PC-3 (cell line): ENCODE measurements at regions of chr1 and their contacts with region 1.

Region 1: GRCh38 chr1:32072622-32073298 is at the start of gene TMEM39B:
- DNase-seq: peak; percentile 93
- ATAC-seq: peak; percentile 80
- H3K4me3 ChIP-seq: peak within 1 kb of the TSS; percentile 95
- H3K27ac ChIP-seq: peak within 1 kb of the TSS; percentile 81
- H3K4me1 ChIP-seq: peaks cover 17% of the 10 kb centered on the region
- H3K27me3 ChIP-seq: no peaks in the 10 kb centered on the region
- CTCF ChIP-seq: no peak
- total RNA-seq, gene TMEM39B: 7.7 and 9.4 TPM in 2 replicates

Region 2: DNA sequence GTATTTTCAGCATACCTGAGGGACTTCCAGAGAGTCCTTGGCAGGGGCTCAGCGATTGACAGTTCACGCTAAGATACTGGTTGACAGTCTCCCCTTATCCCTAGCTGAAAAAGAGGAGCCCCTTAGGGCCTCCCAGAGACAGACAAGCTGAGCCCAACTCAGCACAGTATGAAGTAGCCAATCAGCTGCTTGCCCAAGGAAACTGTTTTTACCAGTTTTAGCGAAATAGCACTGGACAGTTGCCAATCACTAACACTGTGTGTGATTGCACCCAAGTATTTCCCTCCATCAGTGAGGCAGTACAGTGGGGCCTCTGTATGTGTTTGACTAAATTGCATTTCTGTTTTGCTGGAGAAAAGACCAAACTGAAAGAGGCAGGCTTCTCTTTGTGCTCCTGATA is 32.0 kb before region 1 on chr1:
- CTCF ChIA-PET with region 1: no interaction called
- POLR2A ChIA-PET with region 1: no interaction called
- intact Hi-C with region 1: no loop called
- DNase-seq: no peak
- ATAC-seq: no peak
- H3K4me3 ChIP-seq: no peak overlapping the region
- H3K27ac ChIP-seq: no peak overlapping the region
- H3K4me1 ChIP-seq: no peaks in the 10 kb centered on the region
- H3K27me3 ChIP-seq: no peaks in the 10 kb centered on the region
- CTCF ChIP-seq: no peak

Region 3: GRCh38 chr1:32107742-32108661 is 35.2 kb after region 1 on chr1 and contains the start of gene KPNA6:
- CTCF ChIA-PET with region 1: interaction called, 4 read pairs
- POLR2A ChIA-PET with region 1: interaction called, 31 read pairs
- intact Hi-C with region 1: no loop called
- DNase-seq: peak; percentile 95
- ATAC-seq: peak; percentile 82
- H3K4me3 ChIP-seq: peak within 1 kb of the TSS; percentile 97
- H3K27ac ChIP-seq: peak within 1 kb of the TSS; percentile 73
- H3K4me1 ChIP-seq: peaks cover 7% of the 10 kb centered on the region; the same call in 1 of the 2 replicates
- H3K27me3 ChIP-seq: no peaks in the 10 kb centered on the region
- CTCF ChIP-seq: no peak
- total RNA-seq, gene KPNA6: 45.7 and 45.8 TPM in 2 replicates

Region 4: DNA sequence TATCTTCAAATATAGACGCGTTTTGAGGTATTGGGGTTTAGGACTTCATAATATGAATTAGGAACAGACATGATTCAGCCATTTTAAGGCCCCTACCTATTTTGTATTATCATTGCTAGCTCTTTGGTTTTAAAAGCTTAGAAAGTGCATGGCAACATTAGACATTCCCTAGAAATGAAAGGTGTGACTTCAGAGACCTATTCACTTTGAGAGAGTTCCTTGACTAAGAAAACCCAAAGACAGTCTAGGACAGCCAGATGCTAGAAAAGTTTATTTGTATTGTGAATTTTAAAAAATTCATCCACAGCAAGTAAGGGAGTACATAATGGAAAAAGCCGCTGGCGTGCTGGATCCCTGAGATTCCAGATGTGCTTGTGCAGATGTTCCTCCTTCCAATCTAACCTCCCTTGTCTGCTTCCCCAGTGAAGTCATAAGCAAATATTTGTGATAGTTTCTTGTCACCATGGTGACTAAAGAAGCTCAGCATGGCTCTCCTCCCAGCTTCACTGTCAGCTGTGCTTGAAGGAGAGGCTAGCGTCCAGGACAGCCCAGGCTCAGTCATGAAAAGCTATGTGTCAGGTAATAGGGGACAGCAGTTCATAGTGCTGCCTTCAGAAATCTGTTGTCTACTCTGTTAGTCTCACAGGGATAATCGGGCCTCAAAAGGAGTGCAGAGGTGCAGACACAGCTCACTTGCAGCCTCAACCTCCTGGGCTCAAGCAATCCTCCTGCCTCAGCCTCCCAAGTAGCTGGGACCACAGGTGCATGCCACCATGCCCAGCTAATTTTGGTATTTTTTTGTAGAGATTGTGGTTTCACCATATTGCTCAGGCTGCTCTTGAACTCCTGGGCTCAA is 69.9 kb after region 1 on chr1:
- CTCF ChIA-PET with region 1: no interaction called
- POLR2A ChIA-PET with region 1: no interaction called
- intact Hi-C with region 1: no loop called
- DNase-seq: peak; percentile 82
- ATAC-seq: peak; percentile 83
- H3K4me3 ChIP-seq: no peak overlapping the region
- H3K27ac ChIP-seq: peak overlapping the region; percentile 34
- H3K4me1 ChIP-seq: peaks cover 35% of the 10 kb centered on the region
- H3K27me3 ChIP-seq: no peaks in the 10 kb centered on the region
- CTCF ChIP-seq: no peak

Region 5: GRCh38 chr1:32786856-32787255 is 714.1 kb after region 1 on chr1:
- CTCF ChIA-PET with region 1: no interaction called
- POLR2A ChIA-PET with region 1: no interaction called
- intact Hi-C with region 1: no loop called
- DNase-seq: peak; percentile 38
- ATAC-seq: no peak; the same call in 1 of the 2 replicates
- H3K4me3 ChIP-seq: no peak overlapping the region
- H3K27ac ChIP-seq: no peak overlapping the region
- H3K4me1 ChIP-seq: peaks cover 14% of the 10 kb centered on the region
- H3K27me3 ChIP-seq: no peaks in the 10 kb centered on the region
- CTCF ChIP-seq: peak; percentile 55